ENCODE measurements at regions of chr9 and their contacts with region 1.

Region 1: DNA sequence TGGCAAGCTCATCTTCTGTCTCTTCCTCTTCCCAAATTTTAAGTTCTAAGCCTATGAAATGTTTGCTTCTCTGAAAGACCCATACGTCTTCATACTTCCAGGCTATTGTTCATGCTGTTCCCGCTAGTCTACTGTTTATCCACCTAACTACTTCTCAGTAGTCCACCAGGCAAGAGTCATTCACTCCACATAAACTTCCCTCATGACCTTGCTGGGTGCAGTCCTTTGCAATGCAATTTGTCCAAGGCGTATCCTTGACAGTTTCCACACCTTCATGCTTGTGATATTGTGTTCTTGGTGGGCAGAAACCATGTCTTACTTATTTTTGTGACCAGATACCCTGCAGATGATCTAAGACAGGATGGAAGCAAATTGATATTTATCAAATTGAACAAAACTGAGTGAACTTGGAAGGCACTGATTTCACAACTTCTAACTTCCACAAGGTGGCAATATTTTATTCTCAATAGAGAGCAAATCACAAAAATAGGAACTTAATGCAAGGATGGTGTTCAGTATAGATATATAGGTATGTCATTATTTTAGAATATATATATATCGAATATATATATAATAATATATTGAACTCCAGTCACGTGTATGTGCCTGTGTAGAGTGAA is 30.3 kb downstream of the TYRP1 start:
- DNase-seq: no peak

Region 2: DNA sequence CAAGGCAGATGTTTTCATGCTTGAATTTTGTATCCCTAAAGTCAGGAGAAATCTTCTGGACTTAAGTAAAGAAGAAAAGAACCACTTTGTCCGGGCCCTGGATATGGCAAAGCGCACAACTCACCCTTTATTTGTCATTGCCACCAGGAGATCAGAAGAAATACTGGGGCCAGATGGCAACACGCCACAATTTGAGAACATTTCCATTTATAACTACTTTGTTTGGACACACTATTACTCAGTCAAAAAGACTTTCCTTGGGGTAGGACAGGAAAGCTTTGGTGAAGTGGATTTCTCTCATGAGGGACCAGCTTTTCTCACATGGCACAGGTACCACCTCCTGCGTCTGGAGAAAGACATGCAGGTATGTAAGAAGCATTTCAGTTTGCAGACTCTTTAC is 28.0 kb before region 1 on chr9:
- CTCF ChIA-PET with region 1: no interaction called
- POLR2A ChIA-PET with region 1: no interaction called
- DNase-seq: no peak

Region 3: GRCh38 chr9:12884737-12885414 is 161.4 kb after region 1 on chr9:
- CTCF ChIA-PET with region 1: interaction called, 10 read pairs
- POLR2A ChIA-PET with region 1: no interaction called
- DNase-seq: peak; percentile 10

Measured in HEK293T (cell line).